Heart right ventricle (tissue), 16 donors: ENCODE measurements at regions of chr9 and their contacts with region 1.

Region 1: GRCh38 chr9:33404788-33405362 is 2.5 kb upstream of the AQP7 start:
- DNase-seq: no peak
- ATAC-seq: peak in 6 of 8 donors; percentile 16 to 61 (median 42)
- H3K4me3 ChIP-seq: no peak overlapping the region
- H3K27ac ChIP-seq: peak overlapping the region in 8 of 10 donors; percentile 84 to 96 (median 92)
- H3K4me1 ChIP-seq: peaks cover 10 to 59% (median 39%) of the 10 kb centered on the region in 9 donors
- H3K27me3 ChIP-seq: no peaks in the 10 kb centered on the region
- CTCF ChIP-seq: no peak

Region 2: DNA sequence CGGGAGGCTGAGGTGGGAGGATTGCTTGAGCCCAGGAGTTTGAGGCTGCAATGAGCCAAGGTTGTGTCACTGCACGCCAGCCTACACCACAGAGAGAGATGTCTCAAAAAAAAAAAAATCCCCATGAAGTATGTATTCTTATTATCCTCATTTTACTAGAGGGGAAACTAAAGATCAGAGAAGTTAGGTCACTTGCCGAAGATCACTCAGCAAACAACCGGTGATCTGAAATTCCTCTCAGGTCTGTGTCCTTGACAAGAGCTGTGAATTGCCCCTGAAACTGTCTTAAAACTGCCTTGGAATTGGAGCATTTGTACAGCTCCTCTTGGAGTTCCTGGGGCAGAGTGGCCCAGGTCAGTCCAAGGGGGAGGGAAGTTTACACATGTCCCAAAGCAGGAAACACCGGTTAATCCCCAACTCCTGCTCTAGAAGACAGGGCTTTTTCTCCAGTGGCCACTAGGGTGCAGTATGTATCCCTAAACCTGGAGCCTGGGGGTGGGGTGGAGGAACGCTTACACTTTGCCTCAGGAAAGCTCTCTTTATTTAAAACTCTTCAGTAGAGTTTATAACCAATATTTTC is 30.2 kb before region 1 on chr9:
- intact Hi-C with region 1: loop called in 2 of 10 experiments (anchors 5 kb)
- DNase-seq: peak in 1 of 2 donors; percentile 87
- ATAC-seq: peak; percentile 63 to 92 (median 82)
- H3K4me3 ChIP-seq: peak overlapping the region in 6 of 10 donors; percentile 6 to 30 (median 22)
- H3K27ac ChIP-seq: peak overlapping the region in 6 of 10 donors; percentile 2 to 79 (median 54)
- H3K4me1 ChIP-seq: peaks cover 5 to 29% (median 18%) of the 10 kb centered on the region in 9 donors
- H3K27me3 ChIP-seq: no peaks in the 10 kb centered on the region
- CTCF ChIP-seq: peak; percentile 72 to 94 (median 88)

Region 3: GRCh38 chr9:33439731-33440130 is 34.9 kb after region 1 on chr9:
- intact Hi-C with region 1: loop called in 1 of 10 experiments (anchors 2 kb)
- DNase-seq: no peak
- ATAC-seq: peak in 2 of 8 donors; percentile 10 to 12
- H3K4me3 ChIP-seq: no peak overlapping the region
- H3K27ac ChIP-seq: peak overlapping the region in 4 of 10 donors; percentile 5 to 46 (median 38)
- H3K4me1 ChIP-seq: peaks cover 4 to 43% (median 30%) of the 10 kb centered on the region in 9 donors
- H3K27me3 ChIP-seq: peaks cover 0 to 5% (median 0%) of the 10 kb centered on the region in 7 donors
- CTCF ChIP-seq: no peak

Region 4: GRCh38 chr9:33452828-33453271 is 48.0 kb after region 1 on chr9:
- intact Hi-C with region 1: loop called in 4 of 10 experiments (anchors 5 kb)
- DNase-seq: peak in 1 of 2 donors; percentile 34
- ATAC-seq: peak in 7 of 8 donors; percentile 12 to 66 (median 58)
- H3K4me3 ChIP-seq: no peak overlapping the region
- H3K27ac ChIP-seq: no peak overlapping the region
- H3K4me1 ChIP-seq: peaks cover 0 to 10% (median 4%) of the 10 kb centered on the region in 9 donors
- H3K27me3 ChIP-seq: peaks cover 0 to 4% (median 0%) of the 10 kb centered on the region in 7 donors
- CTCF ChIP-seq: peak in 8 of 9 donors; percentile 14 to 76 (median 64)

Region 5: GRCh38 chr9:33510264-33511183 is 105.6 kb after region 1 on chr9:
- intact Hi-C with region 1: loop called in 1 of 10 experiments (anchors 10 kb)
- DNase-seq: peak; percentile 72 to 77
- ATAC-seq: peak; percentile 91 to 98 (median 93)
- H3K4me3 ChIP-seq: peak overlapping the region; percentile 40 to 74 (median 60)
- H3K27ac ChIP-seq: peak overlapping the region; percentile 38 to 97 (median 90)
- H3K4me1 ChIP-seq: peaks cover 0 to 10% (median 7%) of the 10 kb centered on the region in 9 donors
- H3K27me3 ChIP-seq: no peaks in the 10 kb centered on the region
- CTCF ChIP-seq: no peak

Region 6: GRCh38 chr9:33721674-33722358 is 316.9 kb after region 1 on chr9:
- intact Hi-C with region 1: no loop called
- DNase-seq: peak; percentile 78 to 85
- ATAC-seq: peak; percentile 73 to 91 (median 84)
- H3K4me3 ChIP-seq: no peak overlapping the region
- H3K27ac ChIP-seq: no peak overlapping the region
- H3K4me1 ChIP-seq: peaks cover 0 to 12% (median 3%) of the 10 kb centered on the region in 9 donors
- H3K27me3 ChIP-seq: peaks cover 0 to 18% (median 0%) of the 10 kb centered on the region in 7 donors
- CTCF ChIP-seq: peak in 8 of 9 donors; percentile 100